A549 (cell line): ENCODE measurements at regions of chr5 and their contacts with region 1.

Region 1: GRCh38 chr5:170633235-170634081 is 129.6 kb downstream of the KCNIP1 start:
- DNase-seq: peak; percentile 69 to 77
- ATAC-seq: peak; percentile 33 to 62
- H3K4me3 ChIP-seq: peak overlapping the region; percentile 41
- H3K27ac ChIP-seq: peak overlapping the region; percentile 66 to 84
- H3K4me1 ChIP-seq: peaks cover 20% of the 10 kb centered on the region
- CTCF ChIP-seq: no peak
- EP300 ChIP-seq: no peak
- POLR2A ChIP-seq: no peak
- RAD21 ChIP-seq: no peak

Region 2: DNA sequence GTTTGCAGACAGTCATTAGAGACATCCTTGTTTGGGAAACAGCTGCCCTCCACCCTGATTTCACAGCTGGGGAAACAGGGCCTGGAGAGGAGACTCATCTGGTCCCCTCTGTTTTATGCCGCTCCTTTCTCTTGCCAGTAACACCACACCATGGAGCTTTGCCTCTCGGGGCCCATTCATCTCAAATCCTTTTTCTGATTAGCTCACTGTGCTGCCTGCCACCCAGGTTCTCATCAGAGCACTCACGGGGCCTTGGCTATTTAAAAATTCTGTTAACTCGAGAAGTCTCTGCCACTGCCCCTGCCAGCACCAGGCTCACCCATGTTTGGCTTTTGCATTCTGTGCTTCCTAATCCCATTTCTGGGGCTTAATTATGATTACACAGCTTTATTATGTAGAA is 437.5 kb before region 1 on chr5:
- CTCF ChIA-PET with region 1: no interaction called
- POLR2A ChIA-PET with region 1: no interaction called
- DNase-seq: no peak
- ATAC-seq: no peak
- H3K4me3 ChIP-seq: no peak overlapping the region
- H3K27ac ChIP-seq: no peak overlapping the region
- H3K4me1 ChIP-seq: no peaks in the 10 kb centered on the region
- CTCF ChIP-seq: no peak
- EP300 ChIP-seq: no peak
- POLR2A ChIP-seq: no peak
- RAD21 ChIP-seq: no peak

Region 3: DNA sequence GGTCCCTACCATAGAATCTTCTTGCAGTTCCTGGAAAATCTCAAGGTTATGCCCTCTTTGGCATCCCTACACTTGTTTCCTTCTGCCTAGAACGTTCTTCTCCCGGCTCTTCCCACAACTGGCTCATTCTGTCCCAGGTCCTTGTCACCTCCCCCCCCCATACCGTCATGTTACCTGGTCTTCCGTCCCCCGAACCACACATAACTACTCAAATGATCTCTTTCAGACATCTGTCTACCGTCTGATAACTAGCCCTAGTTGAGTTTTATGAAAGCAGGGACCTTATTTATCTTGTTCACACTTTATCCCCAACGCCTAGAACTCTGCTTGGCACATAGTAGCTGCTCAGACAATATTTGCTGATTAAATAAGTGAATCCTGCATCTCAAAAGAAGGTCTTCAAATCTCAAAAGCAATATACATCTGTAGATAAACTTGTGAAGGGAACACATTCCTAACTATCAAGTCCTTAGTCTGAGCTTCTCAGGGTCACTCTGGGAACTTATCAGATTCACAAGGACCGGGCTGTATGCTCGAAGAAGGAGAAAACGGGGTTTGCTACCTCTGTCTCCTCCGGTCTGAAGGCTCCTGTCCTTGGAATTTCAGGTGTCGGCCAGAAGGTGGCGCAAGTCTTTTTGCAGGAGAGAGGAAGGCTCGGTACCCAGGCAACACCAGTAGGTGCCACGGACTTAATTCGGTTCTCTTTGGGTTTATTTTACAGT is 365.9 kb before region 1 on chr5:
- CTCF ChIA-PET with region 1: interaction called, 28 read pairs
- POLR2A ChIA-PET with region 1: no interaction called
- DNase-seq: peak; percentile 76 to 79
- ATAC-seq: peak; percentile 94 to 98
- H3K4me3 ChIP-seq: no peak overlapping the region
- H3K27ac ChIP-seq: no peak overlapping the region
- H3K4me1 ChIP-seq: no peaks in the 10 kb centered on the region
- CTCF ChIP-seq: peak; percentile 85
- EP300 ChIP-seq: no peak
- POLR2A ChIP-seq: no peak
- RAD21 ChIP-seq: peak; percentile 61 to 69; a peak in 4 of 5 replicates

Region 4: DNA sequence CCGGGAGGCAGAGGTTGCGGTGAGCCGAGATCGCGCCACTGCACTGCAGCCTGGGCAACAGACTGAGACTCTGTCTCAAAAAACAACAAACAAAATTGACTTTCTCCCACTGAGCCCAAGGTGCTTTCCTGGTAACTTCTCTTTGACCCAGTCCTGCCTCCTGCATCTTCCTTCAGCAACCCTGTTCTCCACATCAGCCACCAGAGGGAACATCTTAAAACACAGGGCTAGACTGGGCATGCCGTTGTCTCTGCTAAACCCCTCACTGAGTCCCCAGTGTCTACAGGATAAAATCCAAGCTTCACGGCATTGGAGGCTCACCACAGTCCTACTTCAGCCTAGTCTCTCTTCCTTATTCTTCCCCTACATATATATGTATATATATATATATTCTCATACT is 204.4 kb before region 1 on chr5:
- CTCF ChIA-PET with region 1: interaction called, 508 read pairs
- POLR2A ChIA-PET with region 1: interaction called, 6 read pairs
- DNase-seq: peak; percentile 41 to 50
- ATAC-seq: peak; percentile 71 to 92; a peak in 5 of 6 replicates
- H3K4me3 ChIP-seq: no peak overlapping the region
- H3K27ac ChIP-seq: no peak overlapping the region
- H3K4me1 ChIP-seq: no peaks in the 10 kb centered on the region
- CTCF ChIP-seq: no peak
- EP300 ChIP-seq: no peak
- POLR2A ChIP-seq: no peak
- RAD21 ChIP-seq: peak in 1 of 2 experiments; percentile 33; a peak in 2 of 5 replicates

Region 5: DNA sequence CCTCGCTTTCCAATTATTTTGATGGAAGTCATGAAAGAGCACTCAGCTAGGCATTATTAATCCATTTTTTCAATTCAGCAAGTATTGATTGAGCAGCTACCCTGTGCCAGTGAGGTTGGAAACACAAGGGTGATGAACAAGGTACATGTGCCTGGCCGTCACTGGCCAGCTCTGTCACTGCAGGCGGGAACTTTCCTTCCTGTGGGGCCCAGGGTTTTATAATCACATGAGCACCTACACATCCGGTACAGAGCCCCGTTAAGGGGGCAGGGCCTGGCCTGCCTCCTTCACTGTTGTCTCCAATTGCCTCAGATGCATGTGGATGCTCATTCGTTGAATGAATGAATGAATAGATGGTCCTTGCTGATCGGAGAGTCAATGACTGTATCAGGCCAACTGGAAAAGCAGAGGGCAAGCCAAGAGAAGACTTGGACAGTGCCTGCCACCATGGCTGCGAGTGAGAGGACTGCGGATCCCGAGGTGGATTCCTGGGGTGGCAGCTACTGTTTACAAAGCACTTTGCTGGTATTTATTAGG is 188.4 kb before region 1 on chr5:
- CTCF ChIA-PET with region 1: interaction called, 10 read pairs
- POLR2A ChIA-PET with region 1: no interaction called
- DNase-seq: no peak
- ATAC-seq: no peak
- H3K4me3 ChIP-seq: no peak overlapping the region
- H3K27ac ChIP-seq: no peak overlapping the region
- H3K4me1 ChIP-seq: no peaks in the 10 kb centered on the region
- CTCF ChIP-seq: no peak
- EP300 ChIP-seq: no peak
- POLR2A ChIP-seq: no peak
- RAD21 ChIP-seq: no peak

Region 6: GRCh38 chr5:170603578-170604565 is 29.6 kb before region 1 on chr5:
- CTCF ChIA-PET with region 1: interaction called, 35 read pairs
- POLR2A ChIA-PET with region 1: no interaction called
- DNase-seq: peak; percentile 58 to 90
- ATAC-seq: peak; percentile 75 to 96; a peak in 5 of 6 replicates
- H3K4me3 ChIP-seq: no peak overlapping the region
- H3K27ac ChIP-seq: no peak overlapping the region
- H3K4me1 ChIP-seq: no peaks in the 10 kb centered on the region
- CTCF ChIP-seq: peak; percentile 57
- EP300 ChIP-seq: no peak
- POLR2A ChIP-seq: no peak
- RAD21 ChIP-seq: peak; percentile 55 to 84; a peak in 4 of 5 replicates

Region 7: DNA sequence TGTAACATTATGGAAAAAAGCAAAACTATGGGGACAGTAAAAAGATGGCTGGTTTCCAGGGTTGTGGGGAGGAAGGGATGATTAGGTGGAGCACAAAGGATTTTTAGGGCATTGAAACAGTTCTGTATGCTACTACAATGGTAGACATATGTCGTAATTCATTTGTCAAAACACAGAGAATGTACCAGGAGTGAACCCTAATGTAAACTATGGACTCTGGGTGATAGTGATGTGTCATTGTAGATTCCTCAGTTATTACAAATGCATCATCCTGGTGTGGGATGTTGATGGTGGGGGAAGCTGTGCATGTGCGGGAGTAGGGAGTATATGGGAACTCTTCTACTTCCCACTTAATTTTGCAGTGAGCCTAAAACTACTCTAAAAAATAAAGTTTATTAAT is 15.1 kb after region 1 on chr5:
- CTCF ChIA-PET with region 1: interaction called, 29 read pairs
- POLR2A ChIA-PET with region 1: no interaction called
- DNase-seq: peak in 1 of 2 experiments; percentile 31
- ATAC-seq: peak; percentile 49 to 75; a peak in 4 of 6 replicates
- H3K4me3 ChIP-seq: no peak overlapping the region
- H3K27ac ChIP-seq: no peak overlapping the region
- H3K4me1 ChIP-seq: peaks cover 6% of the 10 kb centered on the region; the same call in 2 of the 3 replicates
- CTCF ChIP-seq: no peak
- EP300 ChIP-seq: no peak
- POLR2A ChIP-seq: no peak
- RAD21 ChIP-seq: no peak